ENCODE measurements at regions of chr5 and their contacts with region 1.

Region 1: GRCh38 chr5:83564069-83564749 is 92.7 kb downstream of the VCAN start:
- DNase-seq: peak in 1 of 2 experiments; percentile 24
- H3K4me3 ChIP-seq: no peak overlapping the region
- H3K4me3 Mint-ChIP-seq: peak overlapping the region; percentile 52
- H3K27ac Mint-ChIP-seq: peak overlapping the region; percentile 50
- H3K4me1 ChIP-seq: peaks cover 26% of the 10 kb centered on the region
- H3K4me1 Mint-ChIP-seq: peaks cover 20% of the 10 kb centered on the region
- H3K27me3 ChIP-seq: no peaks in the 10 kb centered on the region
- H3K27me3 Mint-ChIP-seq: no peaks in the 10 kb centered on the region
- CTCF ChIP-seq: peak; percentile 46 to 69

Region 2: GRCh38 chr5:82351754-82352145 is 1212.5 kb before region 1 on chr5:
- CTCF ChIA-PET with region 1: no interaction called
- POLR2A ChIA-PET with region 1: no interaction called
- intact Hi-C with region 1: loop called (anchors 1 kb)
- DNase-seq: peak in 1 of 2 experiments; percentile 60
- H3K4me3 ChIP-seq: no peak overlapping the region
- H3K4me3 Mint-ChIP-seq: no peak overlapping the region
- H3K27ac Mint-ChIP-seq: no peak overlapping the region
- H3K4me1 ChIP-seq: no peaks in the 10 kb centered on the region
- H3K4me1 Mint-ChIP-seq: peaks cover 8% of the 10 kb centered on the region
- H3K27me3 ChIP-seq: no peaks in the 10 kb centered on the region
- H3K27me3 Mint-ChIP-seq: no peaks in the 10 kb centered on the region
- CTCF ChIP-seq: peak; percentile 66

Region 3: DNA sequence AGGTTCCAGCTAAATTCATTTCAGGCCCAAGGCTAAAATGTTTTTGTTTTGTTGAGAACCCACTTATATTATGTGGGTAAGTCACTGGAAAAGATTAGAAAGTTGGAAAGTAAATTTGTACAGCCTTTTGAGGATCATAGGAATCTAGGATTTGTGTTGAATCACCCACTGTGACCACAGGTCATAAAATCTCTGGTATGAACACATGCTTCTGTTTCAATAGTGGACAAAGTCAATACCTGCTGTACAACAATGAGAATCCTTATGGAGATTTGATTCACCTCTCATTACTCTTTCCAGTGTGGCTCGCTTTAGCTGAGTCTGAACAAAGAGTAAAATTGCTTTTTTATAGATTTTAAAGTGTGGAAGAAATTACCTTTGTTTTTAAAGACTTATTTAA is 856.5 kb before region 1 on chr5:
- CTCF ChIA-PET with region 1: no interaction called
- POLR2A ChIA-PET with region 1: no interaction called
- intact Hi-C with region 1: loop called (anchors 5 kb)
- DNase-seq: peak in 1 of 2 experiments; percentile 39
- H3K4me3 ChIP-seq: no peak overlapping the region
- H3K4me3 Mint-ChIP-seq: no peak overlapping the region
- H3K27ac Mint-ChIP-seq: peak overlapping the region; percentile 4
- H3K4me1 ChIP-seq: peaks cover 22% of the 10 kb centered on the region
- H3K4me1 Mint-ChIP-seq: peaks cover 20% of the 10 kb centered on the region
- H3K27me3 ChIP-seq: no peaks in the 10 kb centered on the region
- H3K27me3 Mint-ChIP-seq: no peaks in the 10 kb centered on the region
- CTCF ChIP-seq: no peak

Region 4: DNA sequence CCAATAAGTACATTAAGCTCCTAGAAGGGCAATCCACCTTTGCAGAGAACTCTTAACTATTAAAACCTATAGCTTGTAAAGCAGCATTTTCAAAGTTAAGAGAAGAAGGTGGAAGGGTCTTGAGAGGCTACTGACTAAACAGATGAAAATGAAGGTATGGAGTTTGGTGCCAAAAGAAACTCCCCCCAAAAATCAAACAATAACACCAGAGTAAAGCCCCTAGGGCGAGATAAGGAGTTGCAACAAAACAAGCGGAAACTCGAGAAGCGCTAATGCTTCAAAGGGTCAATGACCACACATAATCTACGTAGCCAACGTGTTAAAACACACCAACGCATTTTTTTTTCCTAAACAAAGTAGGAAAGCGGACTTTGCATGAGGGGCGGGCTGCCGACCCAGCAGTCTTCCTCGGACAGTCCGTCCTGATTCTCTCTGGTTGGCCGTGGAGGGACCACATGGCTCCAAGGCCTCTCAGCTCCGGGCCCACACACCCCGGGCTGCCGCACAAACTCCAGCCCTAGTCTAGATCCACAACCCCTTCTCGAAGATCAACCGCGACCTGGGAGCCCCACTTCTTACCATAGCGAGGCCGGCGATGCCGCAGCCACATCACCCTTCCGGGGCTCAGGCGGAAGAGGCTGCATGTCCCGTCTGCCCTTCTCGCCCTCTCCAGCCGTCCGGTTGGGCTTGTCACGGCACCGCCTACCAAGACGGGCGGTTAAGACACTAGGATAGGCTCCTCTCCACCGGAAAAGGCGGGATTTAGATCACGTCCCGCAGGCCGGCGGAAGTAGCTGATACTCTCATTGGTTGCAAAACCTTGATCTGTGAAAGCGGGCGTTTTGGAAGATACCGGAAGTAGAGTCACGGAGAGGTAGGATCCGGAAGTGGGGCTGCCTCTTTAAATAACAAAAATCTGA is 487.2 kb before region 1 on chr5 and contains the starts of genes TMEM167A and XRCC4:
- CTCF ChIA-PET with region 1: no interaction called
- POLR2A ChIA-PET with region 1: interaction called, 3 read pairs
- intact Hi-C with region 1: loop called (anchors 2 kb)
- DNase-seq: peak; percentile 96 to 98
- H3K4me3 ChIP-seq: peak within 1 kb of the TSS; percentile 94
- H3K4me3 Mint-ChIP-seq: peak within 1 kb of the TSS; percentile 99
- H3K27ac Mint-ChIP-seq: peak within 1 kb of the TSS; percentile 100
- H3K4me1 ChIP-seq: peaks cover 4% of the 10 kb centered on the region; the same call in 1 of the 2 replicates
- H3K4me1 Mint-ChIP-seq: no peaks in the 10 kb centered on the region
- H3K27me3 ChIP-seq: no peaks in the 10 kb centered on the region
- H3K27me3 Mint-ChIP-seq: no peaks in the 10 kb centered on the region
- CTCF ChIP-seq: no peak
- total RNA-seq, gene TMEM167A: 85.0 and 97.1 TPM in 2 replicates
- total RNA-seq, gene XRCC4: 13.0 and 13.5 TPM in 2 replicates

Region 5: DNA sequence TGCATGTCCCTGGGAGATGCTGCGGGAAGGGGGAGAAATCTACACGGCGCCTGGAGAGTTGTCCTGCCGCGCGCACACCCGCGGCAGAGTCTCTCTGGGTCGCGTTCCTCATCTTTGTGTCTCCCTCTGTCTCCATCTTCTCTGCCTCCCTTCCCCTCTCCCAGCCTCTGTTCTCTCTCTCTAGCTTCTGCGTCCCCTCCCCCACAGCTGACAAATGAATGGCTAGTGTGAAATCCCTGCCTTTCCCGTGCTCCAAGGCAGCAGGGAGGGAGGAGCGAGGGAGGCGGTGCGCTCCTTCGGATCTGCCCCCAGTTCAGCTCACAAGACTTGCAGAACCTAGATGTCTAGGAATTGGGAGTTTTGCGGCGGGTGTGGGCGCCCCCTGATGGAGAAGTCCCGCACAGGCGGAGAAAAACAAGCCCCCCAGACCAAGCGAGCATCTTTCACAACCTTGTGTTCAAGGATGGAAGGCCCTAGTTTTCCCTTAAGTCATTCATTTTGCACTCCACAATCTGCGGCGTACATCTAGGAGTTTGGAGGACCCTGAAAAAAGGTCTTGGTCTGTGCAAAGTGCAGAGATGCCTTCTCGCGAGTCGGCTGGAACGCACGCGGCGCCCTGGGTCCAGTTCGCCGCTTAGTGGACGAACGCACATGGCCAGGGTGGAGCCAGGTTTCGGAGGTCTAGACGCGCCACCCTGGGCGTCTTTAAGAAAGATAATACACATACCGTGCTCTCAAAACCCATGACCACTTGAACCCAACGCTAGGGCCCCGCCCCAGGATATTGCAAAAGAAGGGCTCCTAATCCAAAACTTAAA is 90.7 kb before region 1 on chr5:
- CTCF ChIA-PET with region 1: interaction called, 3 read pairs
- POLR2A ChIA-PET with region 1: interaction called, 3 read pairs
- intact Hi-C with region 1: loop called (anchors 1 kb)
- DNase-seq: peak; percentile 78 to 81
- H3K4me3 ChIP-seq: peak overlapping the region; percentile 50
- H3K4me3 Mint-ChIP-seq: peak overlapping the region; percentile 83
- H3K27ac Mint-ChIP-seq: peak overlapping the region; percentile 53
- H3K4me1 ChIP-seq: peaks cover 25% of the 10 kb centered on the region
- H3K4me1 Mint-ChIP-seq: peaks cover 30% of the 10 kb centered on the region
- H3K27me3 ChIP-seq: no peaks in the 10 kb centered on the region
- H3K27me3 Mint-ChIP-seq: peaks cover 7% of the 10 kb centered on the region
- CTCF ChIP-seq: peak; percentile 57 to 68

Region 6: DNA sequence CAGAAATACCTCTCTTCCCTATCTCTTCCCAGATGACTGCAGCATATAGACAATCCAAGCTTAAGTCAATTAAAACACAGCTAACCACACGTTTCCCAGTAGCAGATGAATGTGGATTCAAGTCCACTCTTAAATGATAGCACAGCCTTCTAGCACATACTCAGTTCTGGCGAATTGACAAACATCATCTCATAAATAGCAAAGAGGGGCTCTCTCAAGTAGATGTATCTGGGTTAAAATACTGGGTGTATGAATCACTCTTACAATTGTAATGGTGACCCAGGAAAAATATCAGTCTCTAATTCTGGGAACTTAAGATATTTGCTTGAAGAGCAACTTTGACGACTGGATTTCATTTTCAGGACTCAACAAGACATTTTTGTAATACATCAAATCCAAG is 223.4 kb after region 1 on chr5:
- CTCF ChIA-PET with region 1: no interaction called
- POLR2A ChIA-PET with region 1: no interaction called
- intact Hi-C with region 1: no loop called
- DNase-seq: no peak
- H3K4me3 ChIP-seq: no peak overlapping the region
- H3K4me3 Mint-ChIP-seq: no peak overlapping the region
- H3K27ac Mint-ChIP-seq: no peak overlapping the region
- H3K4me1 ChIP-seq: peaks cover 13% of the 10 kb centered on the region; the same call in 1 of the 2 replicates
- H3K4me1 Mint-ChIP-seq: peaks cover 17% of the 10 kb centered on the region
- H3K27me3 ChIP-seq: no peaks in the 10 kb centered on the region
- H3K27me3 Mint-ChIP-seq: no peaks in the 10 kb centered on the region
- CTCF ChIP-seq: no peak